Activated naive CD4-positive, alpha-beta T cell treated with anti-CD3 and anti-CD28 coated beads, Interleukin-2, amount 10 ng/mL, durations not matched to agents 7 days and 5 days (primary cell): ENCODE measurements at regions of chr19 and their contacts with region 1.

Region 1: DNA sequence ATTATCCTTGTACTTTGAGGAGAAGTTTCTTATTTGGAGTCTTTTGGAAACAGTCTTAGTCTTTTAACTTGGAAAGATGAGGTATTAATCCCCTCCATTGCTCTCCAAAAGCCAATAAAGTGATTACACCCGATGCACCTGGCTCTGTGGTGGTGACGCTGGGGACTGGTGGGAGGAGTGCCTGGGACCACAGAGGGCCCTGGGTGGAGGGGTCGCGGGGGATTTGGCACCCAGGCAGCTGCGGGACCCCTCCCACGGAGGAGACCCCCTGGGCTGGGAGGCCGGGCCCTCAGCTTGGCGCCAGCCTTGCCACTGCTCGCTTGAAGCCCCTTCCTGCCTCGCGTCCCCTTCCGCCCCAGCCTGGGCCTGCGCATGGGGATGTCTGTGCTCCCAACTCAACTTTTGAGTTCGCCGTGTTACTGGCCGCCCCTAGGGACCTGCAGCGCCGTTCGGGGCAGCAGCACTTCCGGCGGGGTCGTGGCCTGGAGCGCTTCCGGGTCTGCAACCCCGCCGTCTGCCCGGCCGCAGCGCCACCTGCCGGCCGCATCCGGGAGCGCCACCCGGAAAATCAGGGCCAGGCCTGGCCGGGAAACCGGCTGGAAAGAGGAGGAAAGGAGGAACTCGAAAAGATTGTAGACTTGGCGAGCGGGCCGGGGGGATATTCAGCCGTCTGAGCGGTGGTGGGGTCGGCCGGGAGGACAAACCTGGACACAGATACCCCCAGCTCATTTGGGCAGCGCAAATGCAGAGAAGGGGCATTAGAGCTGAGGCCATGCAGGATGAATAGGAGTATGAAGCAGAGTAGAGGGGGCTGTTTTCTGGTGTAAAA is 8.4 kb downstream of the PEAK3 start:
- DNase-seq: peak; percentile 86
- H3K4me3 Mint-ChIP-seq: peak overlapping the region; percentile 65
- H3K27ac Mint-ChIP-seq: peak overlapping the region; percentile 86
- H3K4me1 Mint-ChIP-seq: peaks cover 40% of the 10 kb centered on the region
- H3K27me3 Mint-ChIP-seq: peaks cover 3% of the 10 kb centered on the region

Region 2: GRCh38 chr19:2221918-2222317 is 51.7 kb before region 1 on chr19:
- CTCF ChIA-PET with region 1: no interaction called
- DNase-seq: no peak
- H3K4me3 Mint-ChIP-seq: no peak overlapping the region
- H3K27ac Mint-ChIP-seq: no peak overlapping the region
- H3K4me1 Mint-ChIP-seq: peaks cover 4% of the 10 kb centered on the region
- H3K27me3 Mint-ChIP-seq: no peaks in the 10 kb centered on the region

Region 3: GRCh38 chr19:2236314-2237050 is 37.1 kb before region 1 on chr19 and contains the starts of genes PLEKHJ1 and SF3A2:
- CTCF ChIA-PET with region 1: interaction called, 16 read pairs
- DNase-seq: peak; percentile 98
- H3K4me3 Mint-ChIP-seq: peak within 1 kb of the TSS; percentile 98
- H3K27ac Mint-ChIP-seq: peak within 1 kb of the TSS; percentile 98
- H3K4me1 Mint-ChIP-seq: peaks cover 62% of the 10 kb centered on the region
- H3K27me3 Mint-ChIP-seq: peaks cover 4% of the 10 kb centered on the region

Region 4: GRCh38 chr19:2261438-2262172 is 12.0 kb before region 1 on chr19:
- CTCF ChIA-PET with region 1: interaction called, 10 read pairs
- DNase-seq: peak; percentile 75
- H3K4me3 Mint-ChIP-seq: no peak overlapping the region
- H3K27ac Mint-ChIP-seq: no peak overlapping the region
- H3K4me1 Mint-ChIP-seq: peaks cover 41% of the 10 kb centered on the region
- H3K27me3 Mint-ChIP-seq: no peaks in the 10 kb centered on the region

Region 5: DNA sequence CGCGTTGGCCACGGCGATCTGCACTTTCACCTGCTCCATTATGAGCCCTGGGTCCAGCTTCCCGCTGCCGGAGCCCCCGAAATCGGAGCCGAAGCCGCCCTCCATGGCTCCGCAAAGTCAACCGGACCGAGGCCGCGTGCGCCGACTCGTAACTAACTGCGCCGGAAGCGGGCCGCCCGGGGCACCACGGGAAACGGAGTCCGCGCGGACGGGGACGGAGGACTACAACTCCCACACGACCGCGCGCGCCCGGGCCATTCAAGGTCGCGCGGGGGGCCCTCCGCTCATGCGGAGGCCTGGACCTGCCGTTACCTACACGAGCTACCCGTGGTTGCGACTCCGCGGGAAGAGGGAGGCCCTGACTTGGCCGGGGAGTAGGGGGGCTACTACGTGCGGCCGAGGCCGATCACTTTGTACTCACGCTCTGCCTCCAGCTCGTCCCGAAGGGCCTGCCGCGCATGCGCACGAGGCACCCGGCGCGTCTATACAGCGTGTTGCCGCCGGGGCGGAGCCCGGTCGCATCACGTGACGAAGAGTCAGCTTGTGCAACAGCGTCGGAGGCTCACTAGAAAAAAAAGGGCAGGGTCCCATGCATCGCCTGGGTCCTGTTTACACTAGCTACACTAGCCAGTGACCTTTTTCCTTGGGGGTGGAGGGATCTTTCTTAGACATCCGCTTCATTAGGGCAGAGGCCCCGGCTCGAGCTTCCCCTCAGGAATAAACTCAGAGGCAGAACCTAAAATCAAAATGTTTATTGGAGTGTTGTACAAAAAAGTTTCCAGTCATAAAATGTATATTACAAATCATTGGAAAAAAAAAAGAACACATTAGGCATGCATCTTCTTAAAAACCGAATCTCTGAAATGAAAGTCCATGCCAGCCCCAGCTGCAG is 154.1 kb after region 1 on chr19 and contains the start of gene TIMM13:
- CTCF ChIA-PET with region 1: no interaction called
- DNase-seq: peak; percentile 97
- H3K4me3 Mint-ChIP-seq: peak within 1 kb of the TSS; percentile 89
- H3K27ac Mint-ChIP-seq: peak within 1 kb of the TSS; percentile 95
- H3K4me1 Mint-ChIP-seq: peaks cover 19% of the 10 kb centered on the region
- H3K27me3 Mint-ChIP-seq: peaks cover 6% of the 10 kb centered on the region